CD4-positive, alpha-beta T cell (primary cell): ENCODE measurements at regions of chr7 and their contacts with region 1.

Region 1: GRCh38 chr7:44797329-44798251 is 1.1 kb downstream of the PPIA start:
- DNase-seq: peak; percentile 65 to 94 (median 80)
- ATAC-seq: peak; percentile 57
- H3K4me3 ChIP-seq: peak overlapping the region; percentile 65
- H3K4me3 Mint-ChIP-seq: peak overlapping the region; percentile 91
- H3K27ac ChIP-seq: peak overlapping the region; percentile 92 to 97
- H3K27ac Mint-ChIP-seq: peak overlapping the region; percentile 93
- H3K4me1 ChIP-seq: peaks cover 29% of the 10 kb centered on the region
- H3K4me1 Mint-ChIP-seq: peaks cover 40% of the 10 kb centered on the region
- H3K27me3 ChIP-seq: no peaks in the 10 kb centered on the region
- H3K27me3 Mint-ChIP-seq: no peaks in the 10 kb centered on the region
- CTCF ChIP-seq: peak; percentile 56

Region 2: GRCh38 chr7:44044315-44045225 is 753.0 kb before region 1 on chr7 and contains the start of gene DBNL:
- CTCF ChIA-PET with region 1: no interaction called
- POLR2A ChIA-PET with region 1: interaction called, 3 read pairs
- intact Hi-C with region 1: loop called in 1 of 2 experiments (anchors 10 kb)
- DNase-seq: peak; percentile 75 to 92 (median 88)
- ATAC-seq: peak; percentile 54
- H3K4me3 ChIP-seq: peak within 1 kb of the TSS; percentile 99
- H3K4me3 Mint-ChIP-seq: peak within 1 kb of the TSS; percentile 87
- H3K27ac ChIP-seq: peak within 1 kb of the TSS; percentile 89
- H3K27ac Mint-ChIP-seq: peak within 1 kb of the TSS; percentile 91
- H3K4me1 ChIP-seq: peaks cover 62% of the 10 kb centered on the region
- H3K4me1 Mint-ChIP-seq: peaks cover 50% of the 10 kb centered on the region
- H3K27me3 ChIP-seq: no peaks in the 10 kb centered on the region
- H3K27me3 Mint-ChIP-seq: no peaks in the 10 kb centered on the region
- CTCF ChIP-seq: no peak
- total RNA-seq, gene DBNL: 88.5 to 90.6 TPM

Region 3: DNA sequence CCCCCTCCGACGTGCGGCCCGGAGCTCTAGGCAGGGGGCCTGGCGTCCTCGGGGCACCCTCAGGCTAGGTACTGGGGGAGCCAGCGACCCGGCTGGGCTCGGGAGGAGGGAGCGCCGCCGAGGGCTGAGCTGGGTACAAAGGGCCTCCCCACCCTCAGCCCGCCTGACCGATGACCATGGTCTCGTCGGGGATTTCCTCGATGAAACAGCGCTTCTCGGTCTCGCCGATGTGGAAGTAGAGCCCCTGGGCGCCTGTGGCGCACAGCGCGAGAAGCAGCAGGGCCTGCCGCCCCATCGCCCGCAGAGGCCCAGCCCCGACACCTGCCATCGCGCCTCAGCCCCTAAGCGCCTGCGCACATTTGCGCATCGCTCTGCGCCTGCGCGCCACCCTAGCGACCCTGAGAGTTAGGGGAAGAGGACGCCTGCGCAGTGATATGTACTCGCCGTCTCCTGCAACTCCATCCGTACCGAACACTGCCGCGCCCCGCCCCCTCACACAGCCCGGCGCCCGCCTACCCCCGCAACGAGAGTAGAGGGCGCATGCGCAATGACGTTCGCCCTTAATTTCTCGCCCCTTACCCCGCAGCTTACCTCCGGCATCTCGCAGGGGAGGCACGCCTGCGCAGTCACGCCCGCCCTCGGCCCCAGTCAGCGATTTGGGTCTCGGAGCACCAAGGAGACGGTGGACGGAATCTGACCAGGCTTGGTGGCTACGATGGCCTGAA is 215.5 kb before region 1 on chr7 and contains the start of gene TMED4:
- CTCF ChIA-PET with region 1: no interaction called
- POLR2A ChIA-PET with region 1: interaction called, 24 read pairs
- intact Hi-C with region 1: loop called (anchors 2 to 5 kb)
- DNase-seq: peak; percentile 100
- ATAC-seq: peak; percentile 86
- H3K4me3 ChIP-seq: peak within 1 kb of the TSS; percentile 87
- H3K4me3 Mint-ChIP-seq: peak within 1 kb of the TSS; percentile 95
- H3K27ac ChIP-seq: peak within 1 kb of the TSS; percentile 96
- H3K27ac Mint-ChIP-seq: peak within 1 kb of the TSS; percentile 97
- H3K4me1 ChIP-seq: peaks cover 32% of the 10 kb centered on the region
- H3K4me1 Mint-ChIP-seq: peaks cover 39% of the 10 kb centered on the region
- H3K27me3 ChIP-seq: no peaks in the 10 kb centered on the region
- H3K27me3 Mint-ChIP-seq: no peaks in the 10 kb centered on the region
- CTCF ChIP-seq: no peak
- total RNA-seq, gene TMED4: 134 to 138 TPM

Region 4: GRCh38 chr7:44633254-44634186 is 164.1 kb before region 1 on chr7:
- CTCF ChIA-PET with region 1: no interaction called
- POLR2A ChIA-PET with region 1: interaction called, 7 read pairs
- intact Hi-C with region 1: loop called in 1 of 2 experiments (anchors 5 kb)
- DNase-seq: peak in 12 of 14 experiments; percentile 29 to 92 (median 59)
- ATAC-seq: peak; percentile 47
- H3K4me3 ChIP-seq: no peak overlapping the region
- H3K4me3 Mint-ChIP-seq: peak overlapping the region; percentile 78
- H3K27ac ChIP-seq: peak overlapping the region; percentile 87 to 91
- H3K27ac Mint-ChIP-seq: peak overlapping the region; percentile 96
- H3K4me1 ChIP-seq: peaks cover 100% of the 10 kb centered on the region
- H3K4me1 Mint-ChIP-seq: peaks cover 81% of the 10 kb centered on the region
- H3K27me3 ChIP-seq: no peaks in the 10 kb centered on the region
- H3K27me3 Mint-ChIP-seq: no peaks in the 10 kb centered on the region
- CTCF ChIP-seq: no peak

Region 5: DNA sequence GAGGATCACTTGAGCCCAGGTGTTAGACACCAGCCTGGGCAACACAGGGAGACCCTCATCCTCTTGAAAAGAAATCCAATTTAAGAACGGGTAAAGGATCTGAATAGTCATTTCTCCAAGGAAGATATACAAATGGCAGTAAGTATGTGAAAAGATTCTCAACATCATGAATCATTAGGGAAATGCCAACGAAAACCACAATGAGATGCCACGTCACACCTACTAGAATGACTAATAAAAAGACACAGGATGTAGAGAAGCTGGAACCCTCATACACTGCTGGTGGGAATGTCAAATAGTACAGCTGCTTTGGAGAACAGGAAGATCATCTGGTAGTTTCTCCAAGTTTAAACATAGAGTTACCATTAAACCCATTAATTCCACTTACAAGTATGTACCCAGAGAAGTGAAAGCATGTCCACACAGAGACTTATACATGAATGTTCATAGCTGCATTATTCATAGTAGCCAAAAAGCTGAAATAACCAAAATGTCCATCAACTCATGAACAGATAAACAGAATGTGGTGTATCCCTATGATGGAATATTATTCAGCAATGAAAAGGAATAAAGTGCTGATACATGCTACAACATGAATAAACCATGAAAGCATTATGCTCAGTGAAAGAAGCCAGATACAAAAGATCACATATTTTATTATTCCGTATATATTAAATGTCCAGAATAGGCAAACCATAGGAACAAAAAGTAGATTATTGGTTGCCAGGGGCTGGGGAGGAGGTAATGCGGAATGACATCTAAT is 62.0 kb before region 1 on chr7:
- CTCF ChIA-PET with region 1: no interaction called
- POLR2A ChIA-PET with region 1: no interaction called
- intact Hi-C with region 1: no loop called
- DNase-seq: peak in 4 of 14 experiments; percentile 52 to 80 (median 68)
- ATAC-seq: peak; percentile 68
- H3K4me3 ChIP-seq: no peak overlapping the region
- H3K4me3 Mint-ChIP-seq: no peak overlapping the region
- H3K27ac ChIP-seq: no peak overlapping the region
- H3K27ac Mint-ChIP-seq: no peak overlapping the region
- H3K4me1 ChIP-seq: peaks cover 3% of the 10 kb centered on the region
- H3K4me1 Mint-ChIP-seq: peaks cover 6% of the 10 kb centered on the region
- H3K27me3 ChIP-seq: no peaks in the 10 kb centered on the region
- H3K27me3 Mint-ChIP-seq: no peaks in the 10 kb centered on the region
- CTCF ChIP-seq: no peak

Region 6: GRCh38 chr7:44761207-44762161 is 36.1 kb before region 1 on chr7:
- CTCF ChIA-PET with region 1: no interaction called
- POLR2A ChIA-PET with region 1: no interaction called
- intact Hi-C with region 1: no loop called
- DNase-seq: no peak
- ATAC-seq: no peak
- H3K4me3 ChIP-seq: no peak overlapping the region
- H3K4me3 Mint-ChIP-seq: no peak overlapping the region
- H3K27ac ChIP-seq: no peak overlapping the region
- H3K27ac Mint-ChIP-seq: no peak overlapping the region
- H3K4me1 ChIP-seq: peaks cover 4% of the 10 kb centered on the region
- H3K4me1 Mint-ChIP-seq: no peaks in the 10 kb centered on the region
- H3K27me3 ChIP-seq: no peaks in the 10 kb centered on the region
- H3K27me3 Mint-ChIP-seq: no peaks in the 10 kb centered on the region
- CTCF ChIP-seq: no peak

Region 7: DNA sequence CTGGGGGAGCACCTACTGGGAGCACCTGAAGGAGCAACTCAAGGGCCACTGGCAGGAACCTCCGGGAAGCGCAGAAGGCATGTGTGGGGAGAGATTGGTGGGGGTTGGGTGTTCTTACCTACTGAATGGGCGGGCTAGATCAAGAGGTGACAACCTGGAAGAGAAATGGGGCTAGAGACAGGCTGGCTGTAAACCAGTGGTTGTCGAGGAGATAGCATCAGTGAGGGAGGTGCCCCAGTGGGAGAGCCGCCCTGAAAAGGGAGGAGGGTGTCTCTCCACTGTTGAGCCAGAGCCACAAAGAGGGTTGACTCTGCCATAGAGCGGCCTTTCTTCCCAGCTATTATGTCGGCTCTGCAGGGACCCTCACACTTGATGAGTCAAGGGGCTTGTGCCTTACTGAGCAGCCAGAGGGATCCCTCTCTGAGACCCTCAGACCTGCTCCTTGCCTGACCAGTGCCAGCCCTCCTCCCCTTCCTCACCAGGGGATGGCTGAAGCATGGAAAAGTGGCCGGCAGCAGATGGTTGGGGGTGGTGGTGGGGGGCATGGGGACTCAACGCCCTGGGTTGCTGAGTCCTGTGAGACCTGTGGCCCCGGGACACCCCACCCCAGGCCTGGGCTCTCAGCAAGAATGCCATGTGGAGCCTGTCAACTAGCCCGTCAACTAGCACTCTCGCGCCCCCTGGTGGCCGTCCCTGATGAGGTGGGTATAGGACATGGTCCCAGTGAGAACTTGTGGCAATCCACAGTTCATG is 124.2 kb after region 1 on chr7:
- CTCF ChIA-PET with region 1: no interaction called
- POLR2A ChIA-PET with region 1: no interaction called
- intact Hi-C with region 1: loop called in 1 of 2 experiments (anchors 1 kb)
- DNase-seq: peak; percentile 88 to 98 (median 94)
- ATAC-seq: peak; percentile 98
- H3K4me3 ChIP-seq: no peak overlapping the region
- H3K4me3 Mint-ChIP-seq: no peak overlapping the region
- H3K27ac ChIP-seq: no peak overlapping the region
- H3K27ac Mint-ChIP-seq: no peak overlapping the region
- H3K4me1 ChIP-seq: peaks cover 9% of the 10 kb centered on the region
- H3K4me1 Mint-ChIP-seq: peaks cover 4% of the 10 kb centered on the region
- H3K27me3 ChIP-seq: no peaks in the 10 kb centered on the region
- H3K27me3 Mint-ChIP-seq: peaks cover 1% of the 10 kb centered on the region
- CTCF ChIP-seq: peak; percentile 85